ENCODE measurements at regions of chr14 and their contacts with region 1.

Region 1: DNA sequence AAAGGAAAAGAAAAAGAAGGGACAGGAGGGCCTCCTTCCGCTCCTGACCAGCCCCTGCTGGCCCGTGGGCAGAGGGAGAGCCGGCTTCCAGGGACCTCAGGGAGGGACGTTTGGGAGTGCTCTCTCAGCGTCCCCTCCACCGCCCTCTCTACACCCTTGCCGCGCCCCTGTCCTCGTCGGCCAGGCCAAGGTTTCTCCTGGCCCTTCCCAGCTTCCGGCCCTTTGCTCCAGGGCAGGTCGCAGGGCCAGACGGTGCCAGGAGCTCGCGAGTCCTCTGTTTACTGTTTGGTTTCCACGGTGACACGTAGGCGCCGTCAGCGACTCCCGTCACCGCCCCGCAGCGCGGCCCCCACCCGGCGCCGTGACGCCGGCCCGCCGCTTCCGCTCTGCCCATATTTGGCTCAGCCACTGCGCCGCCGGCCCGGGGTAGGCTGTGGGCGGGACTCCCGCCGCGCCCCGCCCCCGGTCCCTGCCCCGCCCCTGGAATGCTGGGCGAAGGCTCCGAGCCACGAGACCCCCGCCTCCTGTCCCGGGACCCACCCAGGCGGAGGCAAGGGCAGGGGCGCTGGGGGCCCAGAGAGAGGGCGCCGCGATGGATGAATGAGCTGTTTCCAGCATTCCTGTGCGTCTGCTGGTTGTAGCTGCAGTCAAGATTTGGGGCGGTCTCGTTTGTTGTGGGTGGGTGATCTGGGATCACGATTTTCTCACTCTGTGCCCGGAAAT is 15.5 kb downstream of the FOS start:
- DNase-seq: peak; percentile 99
- H3K4me3 ChIP-seq: peak overlapping the region; percentile 72 to 84
- H3K27ac ChIP-seq: peak overlapping the region; percentile 72 to 98
- H3K4me1 ChIP-seq: peaks cover 0 to 13% of the 10 kb centered on the region in 2 experiments; a peak in 1 of 4 replicates
- H3K27me3 ChIP-seq: no peaks in the 10 kb centered on the region; the same call in 1 of the 2 replicates
- CTCF ChIP-seq: no peak
- EP300 ChIP-seq: 0 out of 4 replicates have a peak, but pooled peaks of 1 of the 2 experiments have one; percentile 21
- RAD21 ChIP-seq: 0 out of 2 replicates have a peak, but pooled peaks have one; percentile 6

Region 2: GRCh38 chr14:75126679-75127473 is 167.2 kb before region 1 on chr14 and contains the start of gene NEK9:
- CTCF ChIA-PET with region 1: interaction called, 237 read pairs
- POLR2A ChIA-PET with region 1: interaction called, 8 read pairs
- DNase-seq: peak; percentile 94
- H3K4me3 ChIP-seq: peak within 1 kb of the TSS; percentile 70 to 85
- H3K27ac ChIP-seq: peak within 1 kb of the TSS; percentile 77 to 92
- H3K4me1 ChIP-seq: peaks cover 3 to 17% of the 10 kb centered on the region in 2 experiments; a peak in 3 of 4 replicates
- H3K27me3 ChIP-seq: no peaks in the 10 kb centered on the region
- CTCF ChIP-seq: no peak
- EP300 ChIP-seq: 0 out of 4 replicates have a peak, but pooled peaks of 1 of the 2 experiments have one; percentile 15
- RAD21 ChIP-seq: no peak
- polyA plus RNA-seq, gene NEK9: 48.1 and 53.3 TPM in 2 replicates

Region 3: GRCh38 chr14:75141967-75142366 is 152.1 kb before region 1 on chr14:
- CTCF ChIA-PET with region 1: interaction called, 92 read pairs
- POLR2A ChIA-PET with region 1: no interaction called
- DNase-seq: peak; percentile 37
- H3K4me3 ChIP-seq: no peak overlapping the region; a peak in 1 of 4 replicates
- H3K27ac ChIP-seq: no peak overlapping the region
- H3K4me1 ChIP-seq: peaks cover 0 to 6% of the 10 kb centered on the region in 2 experiments; a peak in 2 of 4 replicates
- H3K27me3 ChIP-seq: no peaks in the 10 kb centered on the region
- CTCF ChIP-seq: peak; percentile 62
- EP300 ChIP-seq: no peak
- RAD21 ChIP-seq: peak; percentile 62

Region 4: DNA sequence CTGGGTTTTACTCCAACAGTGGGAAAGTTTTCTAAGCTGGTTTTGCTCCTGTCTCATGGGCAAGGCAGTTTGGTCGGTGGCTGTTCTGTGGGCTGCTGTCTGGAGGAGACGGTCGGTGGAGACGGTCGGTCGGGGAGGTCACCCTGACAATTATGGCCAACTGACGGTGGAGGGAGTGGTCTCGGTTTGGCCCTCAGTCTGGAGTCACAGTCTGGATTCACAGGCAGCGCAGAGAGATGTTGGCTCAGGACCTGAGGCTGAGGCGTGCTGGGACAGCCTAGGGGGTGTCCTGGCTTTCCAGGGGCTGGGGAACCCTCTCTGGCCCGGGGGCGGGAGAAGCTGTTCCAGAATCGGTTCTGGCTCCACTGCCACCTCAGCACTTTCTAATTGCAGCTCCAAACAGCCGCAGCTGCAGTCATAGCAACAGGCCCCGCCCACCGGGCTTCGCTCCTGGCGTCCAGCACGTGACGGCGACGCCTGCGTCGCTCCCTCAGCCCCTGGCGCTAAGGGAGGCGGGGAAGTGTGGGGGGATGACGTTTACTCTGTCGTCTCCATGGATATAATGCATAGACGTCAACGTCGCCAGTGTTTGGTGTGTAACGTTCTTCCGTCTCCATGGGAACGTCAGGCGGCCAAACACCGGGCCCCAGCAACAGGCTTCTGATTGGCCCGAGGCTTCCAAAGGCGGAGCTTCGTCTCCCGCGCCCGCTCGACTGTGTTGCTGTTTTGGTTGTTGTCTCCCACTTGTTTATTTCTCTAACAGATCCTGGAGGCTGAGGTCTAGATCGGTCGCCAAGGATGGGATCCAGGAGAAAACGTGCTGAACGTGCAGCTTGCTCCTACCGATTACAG is 35.2 kb before region 1 on chr14:
- CTCF ChIA-PET with region 1: interaction called, 10 read pairs
- POLR2A ChIA-PET with region 1: interaction called, 6 read pairs
- DNase-seq: peak; percentile 92
- H3K4me3 ChIP-seq: peak overlapping the region; percentile 42 to 52; a peak in 3 of 4 replicates
- H3K27ac ChIP-seq: peak overlapping the region; percentile 96 to 98
- H3K4me1 ChIP-seq: peaks cover 17 to 20% of the 10 kb centered on the region in 2 experiments; a peak in 3 of 4 replicates
- H3K27me3 ChIP-seq: no peaks in the 10 kb centered on the region
- CTCF ChIP-seq: no peak
- EP300 ChIP-seq: peak in 1 of 2 experiments; percentile 62; a peak in 2 of 4 replicates
- RAD21 ChIP-seq: peak; percentile 1; the same call in 1 of the 2 replicates

Region 5: DNA sequence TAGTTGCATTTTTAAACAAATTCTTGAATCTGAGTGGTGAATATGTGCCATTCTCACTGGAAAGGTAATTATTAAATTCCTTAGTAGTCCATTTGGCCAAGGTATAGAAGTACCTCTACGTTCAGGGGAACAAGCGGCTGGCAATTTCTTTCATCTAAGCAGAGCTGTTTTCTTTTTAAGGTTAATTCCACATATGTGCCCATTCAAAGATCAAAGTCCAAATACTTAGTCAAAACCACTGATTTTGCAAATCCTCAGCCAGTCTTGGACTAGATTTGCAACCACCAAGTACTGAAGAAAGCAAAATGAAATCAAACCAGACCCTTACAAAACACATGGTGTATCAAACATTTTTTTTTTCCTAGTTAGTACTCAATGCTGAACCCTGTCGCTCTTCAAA is 65.0 kb after region 1 on chr14:
- CTCF ChIA-PET with region 1: no interaction called
- POLR2A ChIA-PET with region 1: no interaction called
- DNase-seq: no peak
- H3K4me3 ChIP-seq: no peak overlapping the region
- H3K27ac ChIP-seq: no peak overlapping the region
- H3K4me1 ChIP-seq: no peaks in the 10 kb centered on the region
- H3K27me3 ChIP-seq: peaks cover 18% of the 10 kb centered on the region
- CTCF ChIP-seq: no peak
- EP300 ChIP-seq: no peak
- RAD21 ChIP-seq: no peak

Region 6: DNA sequence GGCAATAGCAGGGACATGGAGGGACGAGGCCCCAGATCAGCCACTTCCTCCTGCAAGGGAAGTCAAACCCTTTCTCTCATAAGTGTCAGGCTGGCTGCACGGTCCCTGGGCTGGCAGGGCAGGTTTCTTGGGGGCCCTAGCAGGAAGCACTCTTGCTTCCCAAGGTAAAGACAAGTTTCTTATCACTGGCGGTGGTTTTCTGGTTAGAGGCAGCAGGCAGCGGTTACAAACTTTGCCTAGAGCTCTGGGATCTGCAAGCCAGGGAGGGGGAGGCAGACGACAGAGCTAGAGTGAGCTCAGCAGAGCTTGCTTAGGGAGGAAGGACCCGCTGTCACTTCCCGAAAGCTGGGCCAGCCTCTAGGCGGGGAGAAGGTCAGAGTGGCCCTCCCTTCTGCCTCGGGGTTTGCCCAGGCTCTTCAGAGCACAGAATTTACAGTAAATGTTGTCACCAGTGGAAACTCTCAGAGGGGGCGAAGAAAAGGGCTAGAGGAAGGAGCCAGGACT is 248.6 kb after region 1 on chr14:
- CTCF ChIA-PET with region 1: no interaction called
- POLR2A ChIA-PET with region 1: no interaction called
- DNase-seq: no peak
- H3K4me3 ChIP-seq: no peak overlapping the region
- H3K27ac ChIP-seq: no peak overlapping the region
- H3K4me1 ChIP-seq: no peaks in the 10 kb centered on the region
- H3K27me3 ChIP-seq: no peaks in the 10 kb centered on the region
- CTCF ChIP-seq: no peak
- EP300 ChIP-seq: no peak
- RAD21 ChIP-seq: no peak